ENCODE measurements at regions of chr1 and their contacts with region 1.

Region 1: GRCh38 chr1:50852889-50853288 is 107.2 kb downstream of the FAF1 start:
- DNase-seq: no peak
- H3K4me3 Mint-ChIP-seq: no peak overlapping the region
- H3K27ac Mint-ChIP-seq: no peak overlapping the region
- H3K4me1 Mint-ChIP-seq: peaks cover 26% of the 10 kb centered on the region
- H3K27me3 Mint-ChIP-seq: no peaks in the 10 kb centered on the region
- CTCF ChIP-seq: no peak

Region 2: DNA sequence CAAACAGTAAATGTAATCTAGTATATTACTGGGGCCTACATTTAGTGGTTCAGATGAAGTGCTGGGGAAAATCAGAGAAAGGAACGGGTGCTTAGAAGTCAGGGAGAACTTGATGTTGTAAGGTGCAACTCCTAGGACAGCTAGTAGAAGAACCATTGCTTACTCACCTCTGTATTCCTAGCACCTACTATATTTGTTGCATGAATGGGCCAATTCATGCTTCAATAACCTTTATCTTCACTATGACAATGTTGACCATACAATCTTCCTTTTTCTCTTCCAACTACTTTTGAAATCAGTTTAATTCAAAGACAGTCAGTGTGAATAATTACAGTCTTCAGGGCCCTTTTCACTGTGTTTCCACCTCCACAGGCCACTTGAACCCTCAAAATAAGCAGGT is 304.6 kb before region 1 on chr1:
- CTCF ChIA-PET with region 1: no interaction called
- intact Hi-C with region 1: no loop called
- DNase-seq: no peak
- H3K4me3 Mint-ChIP-seq: no peak overlapping the region
- H3K27ac Mint-ChIP-seq: no peak overlapping the region
- H3K4me1 Mint-ChIP-seq: peaks cover 8% of the 10 kb centered on the region
- H3K27me3 Mint-ChIP-seq: no peaks in the 10 kb centered on the region
- CTCF ChIP-seq: no peak

Region 3: DNA sequence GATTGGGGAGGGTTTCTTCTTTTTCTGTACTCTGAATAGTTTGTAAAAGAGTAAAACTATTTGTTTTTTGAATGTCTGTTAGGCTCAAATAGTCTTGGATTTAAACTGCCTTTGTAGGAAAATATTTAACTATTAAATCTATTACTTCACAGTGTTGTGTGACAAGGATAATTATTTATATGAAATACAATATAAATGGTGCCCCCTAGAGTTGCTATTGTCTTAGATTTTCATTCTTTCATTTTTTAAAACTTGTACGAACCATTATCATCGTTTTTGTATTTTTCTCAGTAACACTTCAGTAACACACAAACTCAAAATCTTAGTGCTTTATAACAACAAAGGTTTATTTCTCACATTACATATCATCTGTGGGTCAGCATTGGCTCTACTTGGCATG is 286.6 kb after region 1 on chr1:
- CTCF ChIA-PET with region 1: no interaction called
- intact Hi-C with region 1: no loop called
- DNase-seq: no peak
- H3K4me3 Mint-ChIP-seq: no peak overlapping the region
- H3K27ac Mint-ChIP-seq: no peak overlapping the region
- H3K4me1 Mint-ChIP-seq: no peaks in the 10 kb centered on the region
- H3K27me3 Mint-ChIP-seq: no peaks in the 10 kb centered on the region
- CTCF ChIP-seq: peak; percentile 13

Region 4: GRCh38 chr1:51285791-51286190 is 432.9 kb after region 1 on chr1:
- CTCF ChIA-PET with region 1: interaction called, 10 read pairs
- intact Hi-C with region 1: no loop called
- DNase-seq: no peak
- H3K4me3 Mint-ChIP-seq: no peak overlapping the region
- H3K27ac Mint-ChIP-seq: no peak overlapping the region
- H3K4me1 Mint-ChIP-seq: peaks cover 16% of the 10 kb centered on the region
- H3K27me3 Mint-ChIP-seq: no peaks in the 10 kb centered on the region
- CTCF ChIP-seq: no peak